Naive thymus-derived CD4-positive, alpha-beta T cell (primary cell): ENCODE measurements at regions of chr17 and their contacts with region 1.

Region 1: DNA sequence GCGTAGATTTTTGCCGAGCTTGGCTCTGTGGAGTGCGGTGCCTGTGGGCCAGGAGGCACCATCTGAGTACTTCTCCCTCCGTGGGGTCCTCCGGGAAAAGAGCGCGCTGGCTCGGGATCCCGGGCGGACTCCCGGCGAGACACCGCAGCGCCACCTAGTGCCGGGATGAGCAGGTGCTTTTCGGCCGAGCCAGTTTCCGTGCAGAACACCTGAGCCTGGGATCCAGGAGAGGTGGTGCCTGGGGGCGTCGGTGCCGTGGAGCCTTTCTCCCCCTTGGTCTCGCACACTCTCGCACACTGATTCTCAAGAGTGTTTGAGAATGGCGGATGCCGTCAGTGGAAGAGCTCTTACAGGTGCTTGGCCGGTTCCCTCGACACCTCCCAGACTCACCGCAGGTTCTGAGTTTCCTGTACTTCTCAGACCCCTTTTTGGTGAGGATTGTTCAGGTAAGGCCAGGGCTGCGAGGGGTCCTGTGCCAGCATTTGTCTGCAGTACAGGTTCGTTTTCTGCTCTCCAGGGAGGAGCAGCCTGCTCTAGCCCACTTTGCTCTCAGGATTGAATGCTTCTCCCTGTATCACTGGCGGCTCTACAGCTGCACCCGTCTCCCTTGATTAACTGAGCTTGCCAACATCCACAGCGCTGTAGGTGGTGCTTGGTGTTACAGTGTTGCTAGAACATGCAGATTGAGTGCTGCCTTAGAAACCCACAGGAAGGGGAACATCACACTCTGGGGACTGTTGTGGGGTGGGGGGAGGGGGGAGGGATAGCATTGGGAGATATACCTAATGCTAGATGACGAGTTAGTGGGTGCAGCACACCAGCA is 23.3 kb downstream of the TBCD start:
- DNase-seq: peak in 4 of 9 donors; percentile 28 to 56 (median 34)
- ATAC-seq: peak; percentile 67
- H3K4me3 ChIP-seq: peak overlapping the region; percentile 47
- H3K4me3 Mint-ChIP-seq: peak overlapping the region in 2 of 10 donors; percentile 33 to 42
- H3K27ac ChIP-seq: no peak overlapping the region
- H3K27ac Mint-ChIP-seq: peak overlapping the region in 2 of 9 donors; percentile 37 to 55
- H3K4me1 ChIP-seq: peaks cover 8 to 19% of the 10 kb centered on the region in 2 donors
- H3K4me1 Mint-ChIP-seq: peaks cover 2 to 23% (median 13%) of the 10 kb centered on the region in 7 donors
- H3K27me3 ChIP-seq: no peaks in the 10 kb centered on the region
- H3K27me3 Mint-ChIP-seq: no peaks in the 10 kb centered on the region

Region 2: GRCh38 chr17:82668631-82669099 is 106.5 kb before region 1 on chr17:
- CTCF ChIA-PET with region 1: interaction called, 4 read pairs
- POLR2A ChIA-PET with region 1: no interaction called
- intact Hi-C with region 1: loop called in 1 of 2 experiments (anchors 1 kb)
- DNase-seq: peak in 7 of 9 donors; percentile 23 to 45 (median 42)
- ATAC-seq: peak; percentile 92
- H3K4me3 ChIP-seq: no peak overlapping the region
- H3K4me3 Mint-ChIP-seq: peak overlapping the region in 6 of 10 donors; percentile 21 to 60 (median 47)
- H3K27ac ChIP-seq: no peak overlapping the region
- H3K27ac Mint-ChIP-seq: no peak overlapping the region
- H3K4me1 ChIP-seq: no peaks in the 10 kb centered on the region
- H3K4me1 Mint-ChIP-seq: peaks cover 0 to 12% (median 9%) of the 10 kb centered on the region in 7 donors
- H3K27me3 ChIP-seq: no peaks in the 10 kb centered on the region
- H3K27me3 Mint-ChIP-seq: no peaks in the 10 kb centered on the region

Region 3: DNA sequence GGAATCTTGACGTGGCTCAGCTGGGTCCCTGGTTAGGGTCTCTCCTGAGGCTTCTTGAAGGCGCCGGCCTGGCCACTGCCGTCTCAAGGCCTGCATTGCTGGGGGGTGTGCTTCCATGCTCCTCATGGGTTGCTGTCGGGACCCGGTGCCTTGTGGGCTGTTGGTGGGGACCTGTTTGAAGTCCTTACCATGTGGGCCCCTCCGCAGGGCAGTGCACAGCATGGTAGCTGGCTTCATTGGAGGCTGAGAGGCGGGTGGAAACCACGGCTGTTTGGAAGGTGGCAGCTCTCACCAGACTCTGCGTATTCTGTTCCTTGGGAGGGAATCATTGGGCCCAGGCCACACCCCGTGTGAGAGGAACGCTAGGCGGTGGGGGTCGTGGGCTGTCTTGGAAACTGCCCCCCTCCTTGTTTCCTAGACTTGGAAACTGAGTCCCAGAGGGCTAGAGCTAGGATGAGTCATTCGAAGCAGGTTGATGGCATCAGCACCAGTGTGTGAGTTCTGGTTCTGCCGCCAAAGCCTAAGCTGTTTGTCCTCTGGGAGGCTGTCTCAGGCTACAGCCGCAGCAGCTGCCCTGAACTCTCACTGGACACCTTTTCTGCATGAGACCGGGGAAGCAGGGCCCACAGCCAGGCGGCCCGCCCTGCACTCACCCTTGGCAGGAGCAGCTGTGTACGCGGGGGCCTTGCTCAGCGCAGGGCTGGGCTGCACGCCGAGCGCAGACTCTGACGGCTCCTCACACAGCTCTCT is 29.4 kb after region 1 on chr17:
- CTCF ChIA-PET with region 1: no interaction called
- POLR2A ChIA-PET with region 1: no interaction called
- intact Hi-C with region 1: no loop called
- DNase-seq: no peak
- ATAC-seq: no peak
- H3K4me3 ChIP-seq: no peak overlapping the region
- H3K4me3 Mint-ChIP-seq: no peak overlapping the region
- H3K27ac ChIP-seq: no peak overlapping the region
- H3K27ac Mint-ChIP-seq: no peak overlapping the region
- H3K4me1 ChIP-seq: no peaks in the 10 kb centered on the region
- H3K4me1 Mint-ChIP-seq: peaks cover 4 to 22% (median 10%) of the 10 kb centered on the region in 7 donors
- H3K27me3 ChIP-seq: no peaks in the 10 kb centered on the region
- H3K27me3 Mint-ChIP-seq: no peaks in the 10 kb centered on the region